ENCODE measurements at regions of chr1 and their contacts with region 1.

Region 1: DNA sequence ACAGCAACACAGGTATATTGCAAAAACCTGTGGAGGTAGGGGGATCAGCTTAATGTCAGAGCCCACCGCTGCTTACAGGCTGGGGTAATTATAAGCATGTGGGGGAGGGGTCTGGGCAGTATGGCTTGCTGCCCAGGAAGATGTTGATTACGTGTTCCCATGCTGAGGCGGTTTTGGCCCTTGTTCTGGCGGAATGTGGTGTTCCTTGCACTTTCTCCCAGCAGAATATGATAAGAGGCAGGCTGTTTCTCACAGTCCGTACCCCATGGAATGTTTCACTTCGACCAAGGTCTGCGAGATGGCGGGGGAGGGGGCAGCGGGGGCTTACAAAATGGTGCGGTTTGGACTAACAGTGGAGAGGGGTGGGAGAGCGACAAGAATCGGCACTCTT is 9.8 kb upstream of the HPCAL4 start:
- DNase-seq: peak; percentile 18
- ATAC-seq: no peak
- H3K4me3 Mint-ChIP-seq: no peak overlapping the region
- H3K27ac Mint-ChIP-seq: no peak overlapping the region
- H3K4me1 Mint-ChIP-seq: no peaks in the 10 kb centered on the region
- H3K27me3 Mint-ChIP-seq: peaks cover 33% of the 10 kb centered on the region

Region 2: DNA sequence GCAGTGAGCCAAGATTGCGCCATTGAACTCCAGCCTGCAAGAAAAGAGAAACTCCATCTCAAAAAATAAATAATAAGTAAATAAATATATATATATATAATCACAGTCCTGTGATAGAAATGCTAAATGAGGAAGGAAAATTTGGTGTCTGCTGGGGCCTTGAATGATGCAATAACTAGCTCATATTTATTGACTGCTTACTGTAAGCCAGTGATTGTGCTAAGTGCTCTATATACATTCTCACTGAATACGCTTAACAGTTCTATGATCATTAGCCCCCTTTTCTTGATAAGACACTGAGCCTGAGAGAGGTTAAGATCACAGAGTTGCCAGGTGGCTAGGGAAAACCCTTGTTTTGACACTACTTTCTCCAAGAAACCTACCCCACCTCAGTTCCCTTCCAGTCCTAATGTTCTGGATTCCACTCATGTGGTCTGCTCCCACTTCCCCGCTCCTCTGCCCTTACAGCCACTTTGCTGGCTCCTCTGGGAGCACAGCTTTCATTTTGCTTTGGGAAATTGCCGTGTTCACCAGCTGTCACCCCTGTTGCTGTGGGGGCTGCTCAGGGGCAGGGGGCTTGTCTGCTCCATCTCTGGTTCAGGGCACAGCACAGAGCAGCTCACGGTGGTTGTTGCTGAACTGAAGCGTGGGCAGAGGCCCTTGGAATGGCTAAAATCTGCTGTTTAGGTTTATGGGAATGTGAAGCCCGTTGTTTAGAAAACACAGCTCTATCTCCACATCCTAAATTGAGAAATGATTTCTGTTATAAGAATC is 212.1 kb before region 1 on chr1:
- CTCF ChIA-PET with region 1: no interaction called
- DNase-seq: no peak
- ATAC-seq: no peak
- H3K4me3 Mint-ChIP-seq: no peak overlapping the region
- H3K27ac Mint-ChIP-seq: no peak overlapping the region
- H3K4me1 Mint-ChIP-seq: peaks cover 6% of the 10 kb centered on the region
- H3K27me3 Mint-ChIP-seq: peaks cover 28% of the 10 kb centered on the region

Region 3: DNA sequence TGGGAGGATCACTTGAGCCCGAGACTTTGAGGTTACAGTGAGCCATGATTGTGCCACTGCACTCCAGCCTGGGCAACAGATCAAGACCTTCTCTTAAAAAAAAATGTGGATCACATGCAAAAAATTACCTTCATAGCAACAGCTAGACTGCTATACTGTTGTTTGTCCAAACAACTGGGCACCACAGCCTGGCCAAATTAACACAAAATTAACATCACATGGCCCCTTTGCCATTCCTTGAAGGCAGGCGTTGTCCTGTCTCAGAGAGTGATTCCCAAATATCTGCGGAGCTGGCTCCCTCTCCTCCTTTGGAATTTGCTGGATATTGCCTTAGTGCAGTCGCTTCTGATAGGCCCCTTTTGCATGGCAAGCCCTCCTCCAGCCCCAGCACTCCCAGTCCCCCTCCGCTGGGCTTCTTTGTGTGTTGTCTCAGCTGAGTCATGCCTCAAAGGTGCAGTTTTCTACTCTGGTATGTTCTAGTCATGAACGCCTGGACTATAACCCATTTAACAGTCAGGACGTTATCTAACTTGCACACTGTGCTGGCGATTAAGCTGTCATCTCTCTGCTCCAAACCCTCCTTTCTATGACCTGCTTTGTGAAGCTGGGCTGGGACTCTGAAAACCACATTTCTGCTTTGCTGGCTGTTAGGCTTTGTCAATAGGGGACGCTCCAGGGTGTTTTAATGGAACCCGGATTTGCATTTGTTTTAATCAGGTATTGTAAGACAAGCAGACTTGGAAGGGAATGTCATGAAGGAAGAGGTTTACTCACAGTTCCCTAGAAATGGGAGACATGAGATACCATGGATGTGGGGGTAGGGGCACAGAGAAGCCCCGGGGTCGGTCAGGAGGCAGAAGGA is 10.3 kb after region 1 on chr1:
- CTCF ChIA-PET with region 1: interaction called, 10 read pairs
- DNase-seq: no peak
- ATAC-seq: no peak
- H3K4me3 Mint-ChIP-seq: no peak overlapping the region
- H3K27ac Mint-ChIP-seq: no peak overlapping the region
- H3K4me1 Mint-ChIP-seq: no peaks in the 10 kb centered on the region
- H3K27me3 Mint-ChIP-seq: peaks cover 37% of the 10 kb centered on the region

Measured in activated CD8-positive, alpha-beta memory T cell treated with anti-CD3 and anti-CD28 coated beads, Interleukin-2, amount 10 ng/mL, durations not matched to agents 7 days and 5 days (primary cell).